T-cell (primary cell): ENCODE measurements at regions of chr5 and their contacts with region 1.

Region 1: GRCh38 chr5:179777909-179778308 is 15.9 kb upstream of the LTC4S start:
- DNase-seq: no peak
- ATAC-seq: no peak
- H3K4me3 ChIP-seq: no peak overlapping the region
- H3K4me3 Mint-ChIP-seq: no peak overlapping the region
- H3K27ac ChIP-seq: no peak overlapping the region
- H3K27ac Mint-ChIP-seq: no peak overlapping the region
- H3K4me1 ChIP-seq: no peaks in the 10 kb centered on the region
- H3K4me1 Mint-ChIP-seq: no peaks in the 10 kb centered on the region
- H3K27me3 ChIP-seq: no peaks in the 10 kb centered on the region
- H3K27me3 Mint-ChIP-seq: no peaks in the 10 kb centered on the region

Region 2: DNA sequence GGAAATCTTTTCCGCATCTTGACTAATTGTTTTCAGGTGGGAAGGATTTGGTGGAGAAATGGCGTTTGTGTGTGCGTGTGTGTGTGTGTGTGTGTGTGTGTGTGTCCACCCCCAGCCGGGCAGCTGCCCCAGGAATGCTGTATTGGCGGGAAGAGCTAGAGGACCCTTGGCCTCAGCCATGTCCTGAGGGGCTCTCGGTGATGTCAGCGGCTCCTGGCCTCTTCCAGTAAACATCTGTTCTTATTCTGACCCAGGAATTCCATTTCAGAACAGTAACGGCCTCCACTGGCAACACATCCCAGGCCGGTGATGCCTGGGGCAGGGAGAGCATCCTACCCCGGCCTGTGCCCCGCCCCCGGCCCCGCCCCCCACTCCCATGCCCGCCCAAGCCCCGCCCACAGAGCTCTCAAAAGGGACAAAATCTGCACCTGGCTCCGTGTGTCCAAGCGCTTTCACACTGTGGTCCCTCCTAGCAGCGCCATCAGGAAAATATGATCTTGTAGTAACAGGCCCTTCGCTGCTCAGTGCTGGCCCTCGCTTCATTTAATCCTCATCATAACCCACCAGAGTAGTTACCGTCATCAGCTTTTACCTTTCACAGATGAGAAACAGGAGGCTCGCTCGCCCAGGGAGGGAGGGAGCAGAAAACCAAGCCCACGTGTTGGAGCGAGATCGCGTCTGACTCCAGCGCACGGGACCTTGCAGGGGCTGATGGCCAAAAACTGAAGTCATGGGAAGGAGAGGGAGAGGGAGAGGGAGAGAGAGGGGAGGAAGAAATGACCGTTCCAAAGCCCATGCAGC is 451.6 kb before region 1 on chr5:
- CTCF ChIA-PET with region 1: no interaction called
- POLR2A ChIA-PET with region 1: no interaction called
- DNase-seq: no peak
- ATAC-seq: no peak
- H3K4me3 ChIP-seq: no peak overlapping the region
- H3K4me3 Mint-ChIP-seq: no peak overlapping the region
- H3K27ac ChIP-seq: no peak overlapping the region
- H3K27ac Mint-ChIP-seq: no peak overlapping the region
- H3K4me1 ChIP-seq: no peaks in the 10 kb centered on the region
- H3K4me1 Mint-ChIP-seq: no peaks in the 10 kb centered on the region
- H3K27me3 ChIP-seq: peaks cover 0 to 37% of the 10 kb centered on the region in 2 experiments
- H3K27me3 Mint-ChIP-seq: peaks cover 12 to 32% of the 10 kb centered on the region in 2 donors

Region 3: GRCh38 chr5:179795863-179796833 is 18.2 kb after region 1 on chr5:
- CTCF ChIA-PET with region 1: no interaction called
- POLR2A ChIA-PET with region 1: no interaction called
- DNase-seq: peak in 32 of 35 experiments; percentile 36 to 81 (median 60)
- ATAC-seq: peak; percentile 65 to 74 (median 72)
- H3K4me3 ChIP-seq: peak overlapping the region; percentile 40 to 51
- H3K4me3 Mint-ChIP-seq: peak overlapping the region; percentile 28 to 68 (median 65)
- H3K27ac ChIP-seq: peak overlapping the region; percentile 44
- H3K27ac Mint-ChIP-seq: peak overlapping the region; percentile 11 to 55
- H3K4me1 ChIP-seq: peaks cover 18 to 36% of the 10 kb centered on the region in 2 experiments
- H3K4me1 Mint-ChIP-seq: peaks cover 26 to 34% (median 29%) of the 10 kb centered on the region in 3 donors
- H3K27me3 ChIP-seq: no peaks in the 10 kb centered on the region
- H3K27me3 Mint-ChIP-seq: no peaks in the 10 kb centered on the region

Region 4: GRCh38 chr5:179818746-179819295 is 40.9 kb after region 1 on chr5:
- CTCF ChIA-PET with region 1: no interaction called
- POLR2A ChIA-PET with region 1: interaction called in 1 of 2 experiments, 10 read pairs
- DNase-seq: peak; percentile 49 to 94 (median 82)
- ATAC-seq: peak; percentile 52 to 66 (median 56)
- H3K4me3 ChIP-seq: peak overlapping the region; percentile 46 to 64
- H3K4me3 Mint-ChIP-seq: peak overlapping the region; percentile 76 to 94 (median 78)
- H3K27ac ChIP-seq: peak overlapping the region; percentile 98
- H3K27ac Mint-ChIP-seq: peak overlapping the region; percentile 85 to 86
- H3K4me1 ChIP-seq: peaks cover 7 to 63% of the 10 kb centered on the region in 2 experiments
- H3K4me1 Mint-ChIP-seq: peaks cover 39 to 51% (median 41%) of the 10 kb centered on the region in 3 donors
- H3K27me3 ChIP-seq: peaks cover 0 to 21% of the 10 kb centered on the region in 2 experiments
- H3K27me3 Mint-ChIP-seq: no peaks in the 10 kb centered on the region